BJ (cell line): ENCODE measurements at regions of chr6 and their contacts with region 1.

Region 1: GRCh38 chr6:11496152-11497060 is 41.1 kb upstream of the TMEM170B start:
- DNase-seq: peak; percentile 39
- H3K4me3 ChIP-seq: no peak overlapping the region
- H3K27me3 ChIP-seq: no peaks in the 10 kb centered on the region
- CTCF ChIP-seq: peak; percentile 77

Region 2: GRCh38 chr6:11064836-11065235 is 431.6 kb before region 1 on chr6:
- CTCF ChIA-PET with region 1: interaction called, 15 read pairs
- POLR2A ChIA-PET with region 1: no interaction called
- DNase-seq: no peak
- H3K4me3 ChIP-seq: no peak overlapping the region
- H3K27me3 ChIP-seq: no peaks in the 10 kb centered on the region
- CTCF ChIP-seq: no peak

Region 3: GRCh38 chr6:11172501-11173332 is 323.7 kb before region 1 on chr6:
- CTCF ChIA-PET with region 1: interaction called, 16 read pairs
- POLR2A ChIA-PET with region 1: no interaction called
- DNase-seq: no peak
- H3K4me3 ChIP-seq: no peak overlapping the region
- H3K27me3 ChIP-seq: no peaks in the 10 kb centered on the region
- CTCF ChIP-seq: peak; percentile 76

Region 4: GRCh38 chr6:11241793-11242201 is 254.6 kb before region 1 on chr6:
- CTCF ChIA-PET with region 1: interaction called, 17 read pairs
- POLR2A ChIA-PET with region 1: no interaction called
- DNase-seq: no peak
- H3K4me3 ChIP-seq: no peak overlapping the region
- H3K27me3 ChIP-seq: no peaks in the 10 kb centered on the region
- CTCF ChIP-seq: peak; percentile 66

Region 5: GRCh38 chr6:11575408-11576033 is 79.1 kb after region 1 on chr6:
- CTCF ChIA-PET with region 1: interaction called, 15 read pairs
- POLR2A ChIA-PET with region 1: no interaction called
- DNase-seq: peak; percentile 28
- H3K4me3 ChIP-seq: no peak overlapping the region
- H3K27me3 ChIP-seq: no peaks in the 10 kb centered on the region
- CTCF ChIP-seq: peak; percentile 95